ENCODE measurements at regions of chr3 and their contacts with region 1.

Region 1: GRCh38 chr3:71305231-71306206 is 278.0 kb downstream of the FOXP1 start:
- DNase-seq: no peak
- H3K4me3 ChIP-seq: peak overlapping the region; percentile 27 to 62
- H3K27ac ChIP-seq: peak overlapping the region; percentile 68 to 74
- H3K4me1 ChIP-seq: peaks cover 0 to 24% of the 10 kb centered on the region in 2 donors
- H3K27me3 ChIP-seq: no peaks in the 10 kb centered on the region
- CTCF ChIP-seq: no peak

Region 2: DNA sequence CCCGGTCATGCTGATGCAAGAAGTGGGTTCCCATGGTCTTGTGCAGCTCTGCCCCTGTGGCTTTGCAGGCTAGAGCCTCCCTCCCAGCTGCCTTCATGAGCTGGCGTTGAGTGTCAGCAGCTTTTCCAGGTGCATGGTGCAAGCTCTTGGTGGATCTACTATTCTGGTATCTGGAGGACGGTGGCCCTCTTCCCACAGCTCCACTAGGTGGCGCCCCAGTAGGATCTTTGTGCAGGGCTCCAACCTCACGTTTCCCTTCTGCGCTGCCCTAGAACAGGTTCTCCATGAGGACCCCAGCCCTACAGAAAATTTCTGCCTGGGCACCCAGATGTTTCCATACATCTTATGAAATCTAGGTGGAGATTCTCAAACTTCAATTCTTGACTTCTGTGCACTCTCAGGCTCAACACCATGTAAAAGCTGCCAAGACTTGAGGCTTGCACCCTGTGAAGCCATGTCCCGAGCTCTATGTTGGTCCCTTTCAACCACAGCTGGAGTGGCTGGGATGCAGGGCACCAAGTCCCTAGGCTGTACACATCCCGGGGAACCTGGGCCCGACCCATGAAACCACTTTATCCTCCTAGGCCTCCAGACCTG is 754.7 kb before region 1 on chr3:
- intact Hi-C with region 1: loop called (anchors 2 kb)
- DNase-seq: peak in 1 of 2 donors; percentile 73
- H3K4me3 ChIP-seq: no peak overlapping the region
- H3K27ac ChIP-seq: no peak overlapping the region
- H3K4me1 ChIP-seq: no peaks in the 10 kb centered on the region
- H3K27me3 ChIP-seq: no peaks in the 10 kb centered on the region
- CTCF ChIP-seq: peak; percentile 59 to 77 (median 72)

Region 3: GRCh38 chr3:70889162-70890019 is 416.1 kb before region 1 on chr3:
- intact Hi-C with region 1: loop called (anchors 10 kb)
- DNase-seq: peak in 1 of 2 donors; percentile 78
- H3K4me3 ChIP-seq: no peak overlapping the region
- H3K27ac ChIP-seq: peak overlapping the region; percentile 78
- H3K4me1 ChIP-seq: peaks cover 3 to 17% of the 10 kb centered on the region in 2 donors
- H3K27me3 ChIP-seq: no peaks in the 10 kb centered on the region
- CTCF ChIP-seq: no peak

Region 4: DNA sequence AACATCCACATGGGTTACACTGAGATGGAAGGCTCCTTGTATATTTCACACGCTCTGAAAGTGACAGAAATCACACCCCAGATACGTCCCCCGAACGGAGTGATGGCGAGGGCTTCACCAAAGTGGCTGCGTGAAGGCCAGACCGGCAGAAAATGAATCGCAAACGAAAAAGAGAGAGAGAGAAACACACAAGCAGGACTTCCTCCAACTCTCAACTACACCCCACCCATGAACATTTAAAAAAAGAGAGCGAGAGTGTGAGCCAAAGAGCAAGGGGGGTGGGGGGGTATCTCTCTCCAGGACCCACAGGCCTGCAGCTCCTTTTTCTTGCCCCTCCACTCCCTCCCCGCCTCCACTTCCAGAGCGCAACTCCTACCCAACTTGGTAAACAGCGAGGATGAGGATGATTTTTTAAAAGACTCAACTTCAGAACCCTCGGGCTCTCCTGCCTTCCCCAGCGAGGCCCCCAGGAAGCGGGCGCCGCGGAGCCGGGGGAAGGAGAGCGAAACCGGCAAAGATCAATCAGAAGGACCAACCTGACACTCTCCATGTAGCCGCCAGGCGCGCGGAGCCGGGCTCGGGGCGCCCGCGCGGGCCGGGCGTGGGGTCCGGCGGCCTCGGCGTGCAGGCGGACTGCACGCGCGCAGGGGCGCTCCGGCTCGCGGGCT is 241.1 kb before region 1 on chr3:
- intact Hi-C with region 1: loop called (anchors 2 kb)
- DNase-seq: peak in 1 of 2 donors; percentile 76
- H3K4me3 ChIP-seq: peak overlapping the region; percentile 66 to 80
- H3K27ac ChIP-seq: peak overlapping the region; percentile 95 to 98
- H3K4me1 ChIP-seq: peaks cover 3 to 41% of the 10 kb centered on the region in 2 donors
- H3K27me3 ChIP-seq: no peaks in the 10 kb centered on the region
- CTCF ChIP-seq: peak in 1 of 3 experiments; percentile 51

Region 5: DNA sequence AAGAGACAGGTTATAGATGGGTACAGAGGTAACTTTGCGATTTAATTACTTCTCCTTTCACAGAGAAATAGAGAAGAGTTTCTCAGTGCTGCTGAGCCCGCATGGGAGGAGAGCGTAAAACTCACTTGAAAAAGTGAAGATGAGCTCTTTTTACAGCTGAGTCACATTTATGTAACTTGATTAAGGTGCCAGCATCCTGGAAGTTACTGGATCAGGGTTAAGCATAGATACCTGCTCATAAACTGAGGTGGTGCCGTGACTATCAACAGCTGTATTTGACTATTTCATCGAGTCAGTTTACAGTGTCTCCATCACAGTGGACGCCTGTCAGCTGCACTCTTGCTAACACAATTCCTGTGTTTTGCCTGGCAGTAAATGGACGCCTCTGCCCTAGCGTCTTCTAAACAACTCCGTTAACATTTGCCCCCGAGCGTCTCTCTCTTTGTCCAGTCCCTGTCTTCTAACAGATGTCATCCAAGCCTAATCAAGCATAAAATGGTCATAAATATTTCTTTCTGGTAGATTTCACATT is 136.6 kb before region 1 on chr3:
- intact Hi-C with region 1: loop called (anchors 10 kb)
- DNase-seq: no peak
- H3K4me3 ChIP-seq: peak overlapping the region in 1 of 2 donors; percentile 46
- H3K27ac ChIP-seq: peak overlapping the region; percentile 70 to 87
- H3K4me1 ChIP-seq: peaks cover 9 to 56% of the 10 kb centered on the region in 2 donors
- H3K27me3 ChIP-seq: no peaks in the 10 kb centered on the region
- CTCF ChIP-seq: no peak

Region 6: DNA sequence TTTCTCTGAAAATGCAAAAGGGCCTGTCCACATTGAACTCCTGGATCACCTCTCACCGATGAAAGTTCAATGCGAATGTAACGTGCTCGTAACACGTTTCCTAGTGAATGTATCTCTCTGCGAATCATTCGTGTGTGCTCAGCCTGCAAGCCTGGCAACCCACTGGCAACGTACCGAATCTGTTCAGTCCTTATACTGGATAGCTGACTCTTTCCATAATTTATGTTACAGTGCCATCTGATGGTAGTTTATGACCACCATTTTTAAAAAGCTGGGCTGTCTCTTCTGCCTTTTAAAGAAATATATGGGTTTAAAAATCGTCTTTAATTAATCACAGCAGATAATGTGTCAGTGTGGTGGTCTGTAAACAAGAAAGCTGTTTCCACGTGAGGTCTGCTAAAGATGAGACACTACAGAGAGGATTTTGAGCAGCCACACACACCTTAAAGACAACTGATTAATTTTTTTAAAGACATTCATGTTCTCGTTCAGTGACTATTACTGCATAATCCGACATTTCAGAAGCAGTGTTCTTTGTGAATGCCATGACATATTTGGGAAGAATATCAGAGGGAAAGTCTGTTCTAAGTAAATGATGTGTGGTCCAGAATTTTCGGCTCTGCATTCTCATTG is 347.4 kb after region 1 on chr3:
- intact Hi-C with region 1: loop called (anchors 5 kb)
- DNase-seq: peak in 1 of 2 donors; percentile 70
- H3K4me3 ChIP-seq: peak overlapping the region in 1 of 2 donors; percentile 42
- H3K27ac ChIP-seq: no peak overlapping the region
- H3K4me1 ChIP-seq: peaks cover 0 to 6% of the 10 kb centered on the region in 2 donors
- H3K27me3 ChIP-seq: no peaks in the 10 kb centered on the region
- CTCF ChIP-seq: peak; percentile 42 to 63 (median 48)